T-cell (primary cell): ENCODE measurements at regions of chr3 and their contacts with region 1.

Region 1: DNA sequence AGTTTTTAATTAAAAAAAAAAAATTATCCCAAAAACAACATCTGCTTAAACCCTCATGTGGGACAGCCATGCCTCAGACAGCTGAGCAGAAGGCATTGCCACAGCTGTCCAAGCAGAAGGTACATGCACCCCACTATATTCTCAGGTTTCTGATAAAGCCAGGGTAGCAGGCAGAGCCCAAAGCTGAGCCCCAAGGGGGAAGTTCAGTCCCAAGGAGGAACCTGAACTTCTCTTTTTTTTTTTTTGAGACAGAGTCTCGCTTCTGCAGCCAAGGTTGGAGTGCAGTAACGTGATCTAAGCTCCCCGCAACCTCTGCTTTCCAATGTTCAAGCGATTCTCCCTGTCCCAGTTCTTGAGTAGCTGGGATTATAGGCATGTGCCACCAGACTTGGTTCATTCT is 33.2 kb downstream of the MKRN2 start:
- DNase-seq: no peak
- ATAC-seq: no peak
- H3K4me3 ChIP-seq: no peak overlapping the region
- H3K4me3 Mint-ChIP-seq: no peak overlapping the region
- H3K27ac ChIP-seq: no peak overlapping the region
- H3K27ac Mint-ChIP-seq: no peak overlapping the region
- H3K4me1 ChIP-seq: no peaks in the 10 kb centered on the region
- H3K4me1 Mint-ChIP-seq: no peaks in the 10 kb centered on the region
- H3K27me3 ChIP-seq: no peaks in the 10 kb centered on the region
- H3K27me3 Mint-ChIP-seq: no peaks in the 10 kb centered on the region

Region 2: DNA sequence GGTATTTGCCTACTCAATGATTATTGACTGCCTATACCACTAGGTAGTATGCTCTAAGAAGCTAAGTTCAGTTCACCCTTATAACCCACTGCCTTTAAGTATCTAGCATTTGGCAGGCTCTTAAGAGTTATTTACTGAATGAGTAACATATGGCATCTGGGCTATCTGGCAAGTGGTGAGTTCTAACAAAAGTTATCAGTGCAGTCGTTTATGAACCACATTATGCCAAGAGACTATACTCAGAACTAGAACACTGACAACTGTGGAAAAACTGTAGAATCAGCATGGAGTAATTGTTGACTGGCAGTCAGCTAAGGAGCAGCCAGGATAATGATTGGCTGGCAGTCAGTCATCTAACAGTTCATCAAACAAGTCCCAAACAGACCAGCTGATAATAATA is 48.0 kb after region 1 on chr3:
- CTCF ChIA-PET with region 1: no interaction called
- POLR2A ChIA-PET with region 1: interaction called in 1 of 2 experiments, 10 read pairs
- DNase-seq: no peak
- ATAC-seq: no peak
- H3K4me3 ChIP-seq: no peak overlapping the region
- H3K4me3 Mint-ChIP-seq: no peak overlapping the region
- H3K27ac ChIP-seq: no peak overlapping the region
- H3K27ac Mint-ChIP-seq: no peak overlapping the region
- H3K4me1 ChIP-seq: peaks cover 0 to 10% of the 10 kb centered on the region in 2 experiments
- H3K4me1 Mint-ChIP-seq: peaks cover 45 to 53% (median 53%) of the 10 kb centered on the region in 3 donors
- H3K27me3 ChIP-seq: no peaks in the 10 kb centered on the region
- H3K27me3 Mint-ChIP-seq: no peaks in the 10 kb centered on the region